ENCODE measurements at regions of chr9 and their contacts with region 1.

Region 1: DNA sequence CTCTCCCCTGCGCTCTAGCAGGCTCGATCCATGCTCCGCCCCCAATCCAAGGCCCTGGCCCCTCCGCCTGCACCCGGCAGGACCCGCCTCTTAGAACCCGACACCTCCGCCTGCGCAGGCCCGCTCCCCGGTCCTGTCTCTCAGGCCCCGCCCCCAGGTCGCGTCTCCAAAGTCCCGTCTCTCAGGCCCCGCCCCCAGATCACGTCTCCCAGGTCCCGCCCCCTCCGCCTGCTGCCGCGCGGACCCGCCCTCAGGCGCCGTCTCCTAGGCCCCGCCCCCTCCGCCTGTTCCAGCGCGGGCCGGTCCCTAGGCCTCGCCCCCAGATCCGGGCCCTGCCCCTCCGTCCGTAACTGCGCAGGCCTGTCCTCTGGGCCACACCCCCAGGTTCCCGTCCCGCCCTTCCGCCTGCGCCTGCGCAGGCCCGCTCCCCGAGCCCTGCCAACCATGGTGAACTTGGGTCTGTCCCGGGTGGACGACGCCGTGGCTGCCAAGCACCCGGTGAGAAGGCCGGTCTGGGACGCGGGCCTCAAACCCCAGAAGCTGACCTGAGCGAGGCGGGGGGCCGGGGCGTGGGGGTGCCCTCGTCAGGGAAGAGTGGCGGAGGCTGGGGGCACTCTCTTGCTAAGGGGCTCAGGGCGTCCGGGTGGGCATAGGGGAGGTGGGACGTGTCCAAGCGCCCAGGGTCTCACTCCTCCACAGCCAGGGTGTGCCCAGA is at the start of gene TMEM141:
- DNase-seq: peak; percentile 100
- ATAC-seq: peak; percentile 95 to 96 (median 96)
- H3K4me3 ChIP-seq: peak within 1 kb of the TSS; percentile 68 to 94 (median 82)
- H3K27ac ChIP-seq: peak within 1 kb of the TSS; percentile 92 to 99 (median 96)
- H3K4me1 ChIP-seq: peaks cover 6 to 58% (median 29%) of the 10 kb centered on the region in 12 donors
- H3K27me3 ChIP-seq: peaks cover 0 to under 1% (median 0%) of the 10 kb centered on the region in 9 donors
- CTCF ChIP-seq: no peak
- POLR2A ChIP-seq: peak in 1 of 2 donors; percentile 82
- total RNA-seq, gene TMEM141: 45.6 to 122 (median 63.3) TPM

Region 2: DNA sequence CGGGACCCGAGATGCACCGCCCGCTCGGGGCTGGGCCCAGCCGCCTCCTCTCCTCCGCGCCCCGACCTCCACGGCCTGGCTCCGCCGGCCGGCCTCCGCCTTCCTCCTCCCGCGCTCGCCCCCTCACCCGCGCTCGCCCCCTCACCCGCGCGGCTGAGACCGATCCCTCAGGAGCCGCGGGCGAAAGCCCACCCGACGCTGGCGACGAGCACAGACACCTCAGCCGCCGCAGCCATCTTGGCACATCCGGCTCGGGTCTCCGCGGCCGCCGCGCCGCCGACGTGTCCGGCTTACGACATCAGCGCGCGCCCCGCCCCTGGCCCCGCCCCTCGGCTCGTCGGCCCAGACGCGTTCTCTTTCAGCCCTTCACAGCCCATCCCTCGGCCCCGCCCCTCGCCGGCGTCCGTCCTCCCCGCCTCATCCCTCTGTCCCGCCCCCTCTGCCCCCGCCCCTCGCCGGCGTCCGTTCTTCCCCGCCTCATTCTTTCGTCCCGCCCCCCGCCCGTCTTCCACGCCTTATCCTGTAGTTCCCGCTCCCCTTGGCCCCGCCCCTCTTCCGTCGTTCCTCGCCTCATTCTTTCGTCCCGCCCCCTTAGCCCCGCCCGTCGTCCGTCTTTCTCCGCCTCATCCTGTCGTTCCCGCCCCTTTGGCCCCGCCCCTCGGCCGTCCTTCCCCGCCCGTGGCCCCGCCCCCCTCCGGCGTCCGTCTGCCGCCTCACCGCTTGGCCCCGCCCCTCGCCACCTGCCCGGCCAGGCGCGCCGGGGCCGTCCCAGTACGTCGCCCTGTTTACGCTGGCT is 308.1 kb before region 1 on chr9 and contains the start of gene SEC16A:
- intact Hi-C with region 1: loop called in 1 of 10 experiments (anchors 2 kb)
- DNase-seq: peak; percentile 99 to 100 (median 100)
- ATAC-seq: peak; percentile 83 to 92 (median 86)
- H3K4me3 ChIP-seq: peak within 1 kb of the TSS; percentile 72 to 100 (median 94)
- H3K27ac ChIP-seq: peak within 1 kb of the TSS; percentile 92 to 100 (median 99)
- H3K4me1 ChIP-seq: peaks cover 13 to 36% (median 26%) of the 10 kb centered on the region in 12 donors
- H3K27me3 ChIP-seq: no peaks in the 10 kb centered on the region
- CTCF ChIP-seq: no peak
- POLR2A ChIP-seq: peak; percentile 80 to 82
- total RNA-seq, gene SEC16A: 21.1 to 53.3 (median 30.2) TPM

Region 3: GRCh38 chr9:136849038-136849959 is 58.2 kb after region 1 on chr9 and contains the start of gene PHPT1:
- intact Hi-C with region 1: loop called in 6 of 10 experiments (anchors 5 to 10 kb)
- DNase-seq: peak; percentile 99
- ATAC-seq: peak; percentile 84 to 94 (median 89)
- H3K4me3 ChIP-seq: peak within 1 kb of the TSS; percentile 63 to 93 (median 84)
- H3K27ac ChIP-seq: peak within 1 kb of the TSS; percentile 80 to 97 (median 92)
- H3K4me1 ChIP-seq: peaks cover 4 to 61% (median 27%) of the 10 kb centered on the region in 12 donors
- H3K27me3 ChIP-seq: peaks cover 0 to 28% (median 13%) of the 10 kb centered on the region in 9 donors
- CTCF ChIP-seq: no peak
- POLR2A ChIP-seq: peak; percentile 71 to 85
- total RNA-seq, gene PHPT1: 230 to 386 (median 266) TPM

Region 4: DNA sequence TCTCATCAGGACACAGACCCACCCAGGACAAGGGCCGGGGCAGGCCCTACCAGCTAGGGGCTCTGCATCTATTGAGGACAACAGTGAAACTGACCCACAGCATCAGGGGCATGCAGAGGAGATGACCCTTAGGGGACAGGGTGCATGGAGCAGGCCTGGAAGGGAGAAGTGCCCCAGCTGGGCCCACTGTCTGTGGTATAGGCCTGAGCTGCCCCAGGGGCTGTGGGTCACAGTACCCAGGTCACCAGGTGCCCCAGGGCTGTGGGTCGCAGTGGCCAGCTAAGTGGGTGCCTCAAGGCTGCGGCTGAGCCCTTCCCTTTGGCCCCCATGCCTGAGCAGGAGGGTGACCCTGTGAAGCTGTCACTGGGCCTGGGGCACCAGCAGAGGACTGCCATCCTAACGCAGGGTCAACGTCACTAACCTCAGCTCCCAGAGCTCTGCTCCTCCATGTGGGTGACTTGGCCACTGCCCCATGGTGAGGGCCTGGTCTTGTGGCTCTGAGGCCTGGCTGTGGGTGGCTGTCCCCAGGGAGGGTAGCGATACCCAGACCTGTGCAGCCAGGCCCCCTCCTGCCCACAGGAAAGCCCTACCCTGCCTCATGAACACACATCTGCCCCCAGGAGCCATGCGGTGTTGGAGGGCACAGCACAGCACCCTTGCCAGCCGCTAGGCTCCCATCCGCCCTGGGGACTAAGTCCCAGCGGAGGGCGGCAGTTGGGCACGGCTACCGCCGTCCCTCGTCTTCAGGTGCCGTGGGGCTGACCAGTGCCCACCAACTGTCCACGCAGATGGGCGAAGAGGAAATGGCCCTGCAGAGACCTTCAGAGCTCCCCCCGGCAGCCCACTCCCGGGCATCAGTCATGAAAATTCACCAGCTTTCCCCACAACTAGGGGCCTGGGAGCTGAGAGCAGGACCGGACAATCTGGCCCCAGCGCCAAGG is 70.1 kb after region 1 on chr9:
- intact Hi-C with region 1: no loop called
- DNase-seq: peak in 3 of 5 donors; percentile 5 to 24 (median 24)
- ATAC-seq: no peak
- H3K4me3 ChIP-seq: no peak overlapping the region
- H3K27ac ChIP-seq: no peak overlapping the region
- H3K4me1 ChIP-seq: peaks cover 0 to 40% (median 21%) of the 10 kb centered on the region in 12 donors
- H3K27me3 ChIP-seq: no peaks in the 10 kb centered on the region
- CTCF ChIP-seq: no peak
- POLR2A ChIP-seq: no peak

Region 5: DNA sequence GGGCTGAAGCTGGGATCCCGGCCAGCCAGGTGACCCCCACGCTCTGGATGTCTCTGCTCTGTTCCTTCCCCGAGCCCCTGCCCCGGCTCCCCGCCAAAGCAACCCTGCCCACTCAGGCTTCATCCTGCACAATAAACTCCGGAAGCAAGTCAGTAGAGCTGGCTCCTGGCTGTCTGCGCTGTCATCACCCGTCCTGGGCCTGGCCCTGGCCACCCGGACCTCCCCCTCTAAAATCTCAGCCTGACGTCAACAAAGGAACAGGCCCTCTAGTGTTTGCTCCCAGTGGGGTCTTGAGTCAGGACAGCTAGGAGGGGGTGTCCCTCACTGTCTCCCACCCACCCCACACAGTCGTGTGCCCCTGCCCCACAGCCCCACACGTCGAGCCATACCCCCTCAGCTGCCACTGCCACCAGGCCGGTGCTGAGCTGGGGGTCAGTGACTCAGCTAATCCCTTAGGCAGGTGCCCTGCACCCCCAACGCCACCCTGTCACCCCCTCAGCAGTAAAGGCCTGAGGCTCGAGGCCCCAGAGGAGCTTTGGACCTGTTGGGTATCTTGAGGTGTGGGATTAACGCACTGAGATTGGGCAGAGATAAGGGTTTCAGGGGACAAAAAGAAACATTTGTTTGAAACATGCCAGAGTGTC is 190.6 kb after region 1 on chr9:
- intact Hi-C with region 1: loop called in 1 of 10 experiments (anchors 5 kb)
- DNase-seq: peak; percentile 72 to 89 (median 85)
- ATAC-seq: peak; percentile 10 to 61 (median 22)
- H3K4me3 ChIP-seq: no peak overlapping the region
- H3K27ac ChIP-seq: peak overlapping the region; percentile 27 to 98 (median 84)
- H3K4me1 ChIP-seq: peaks cover 4 to 86% (median 45%) of the 10 kb centered on the region in 12 donors
- H3K27me3 ChIP-seq: peaks cover 0 to 36% (median 6%) of the 10 kb centered on the region in 9 donors
- CTCF ChIP-seq: peak in 4 of 12 donors; percentile 9 to 38 (median 32)
- POLR2A ChIP-seq: peak in 1 of 2 donors; percentile 26

Region 6: GRCh38 chr9:137000177-137000883 is 209.2 kb after region 1 on chr9:
- intact Hi-C with region 1: no loop called
- DNase-seq: no peak
- ATAC-seq: no peak
- H3K4me3 ChIP-seq: no peak overlapping the region
- H3K27ac ChIP-seq: peak overlapping the region in 1 of 12 donors; percentile 84
- H3K4me1 ChIP-seq: peaks cover 0 to 60% (median 12%) of the 10 kb centered on the region in 12 donors
- H3K27me3 ChIP-seq: peaks cover 0 to 22% (median 0%) of the 10 kb centered on the region in 9 donors
- CTCF ChIP-seq: no peak
- POLR2A ChIP-seq: no peak

Region 7: GRCh38 chr9:137034863-137035761 is 244.0 kb after region 1 on chr9:
- intact Hi-C with region 1: loop called (anchors 1 to 2 kb)
- DNase-seq: peak; percentile 79 to 93 (median 80)
- ATAC-seq: peak; percentile 64 to 82 (median 76)
- H3K4me3 ChIP-seq: peak overlapping the region in 2 of 12 donors; percentile 4 to 27
- H3K27ac ChIP-seq: peak overlapping the region in 2 of 12 donors; percentile 38 to 68
- H3K4me1 ChIP-seq: peaks cover 0 to 50% (median 11%) of the 10 kb centered on the region in 12 donors
- H3K27me3 ChIP-seq: no peaks in the 10 kb centered on the region
- CTCF ChIP-seq: peak; percentile 85 to 95 (median 90)
- POLR2A ChIP-seq: peak in 1 of 2 donors; percentile 9

Region 8: GRCh38 chr9:137067860-137068538 is 276.9 kb after region 1 on chr9:
- intact Hi-C with region 1: loop called in 2 of 10 experiments (anchors 5 to 10 kb)
- DNase-seq: peak; percentile 72 to 89 (median 82)
- ATAC-seq: peak in 3 of 4 donors; percentile 40 to 47 (median 44)
- H3K4me3 ChIP-seq: no peak overlapping the region
- H3K27ac ChIP-seq: no peak overlapping the region
- H3K4me1 ChIP-seq: peaks cover 0 to 38% (median 14%) of the 10 kb centered on the region in 12 donors
- H3K27me3 ChIP-seq: peaks cover 0 to 14% (median 5%) of the 10 kb centered on the region in 9 donors
- CTCF ChIP-seq: peak; percentile 70 to 85 (median 78)
- POLR2A ChIP-seq: no peak

Region 9: GRCh38 chr9:137240861-137241489 is 449.9 kb after region 1 on chr9 and contains the start of gene TUBB4B:
- intact Hi-C with region 1: loop called in 1 of 10 experiments (anchors 10 kb)
- DNase-seq: peak; percentile 99 to 100 (median 100)
- ATAC-seq: peak; percentile 86 to 94 (median 90)
- H3K4me3 ChIP-seq: peak within 1 kb of the TSS; percentile 70 to 97 (median 92)
- H3K27ac ChIP-seq: peak within 1 kb of the TSS; percentile 94 to 100 (median 98)
- H3K4me1 ChIP-seq: peaks cover 0 to 73% (median 49%) of the 10 kb centered on the region in 12 donors
- H3K27me3 ChIP-seq: no peaks in the 10 kb centered on the region
- CTCF ChIP-seq: peak in 4 of 12 donors; percentile 1 to 6 (median 2)
- POLR2A ChIP-seq: peak; percentile 57 to 97
- total RNA-seq, gene TUBB4B: 244 to 769 (median 456) TPM

Measured in heart left ventricle (tissue), 16 donors.